ENCODE measurements at regions of chr20 and their contacts with region 1.

Region 1: DNA sequence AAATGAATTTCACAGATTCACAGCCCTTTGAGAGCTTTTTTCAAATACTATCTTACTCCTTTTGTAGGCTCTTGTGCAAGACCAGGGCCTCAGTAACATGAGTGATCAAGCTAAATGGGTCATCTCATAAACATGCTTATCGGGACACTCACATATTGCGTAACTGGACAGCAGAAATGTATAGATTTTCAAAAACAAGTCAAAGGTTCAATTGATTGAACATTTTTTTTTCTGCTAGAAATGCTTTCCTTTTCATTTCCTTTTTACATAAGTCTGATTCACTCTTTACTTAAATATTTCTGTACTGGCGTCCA is 8.7 kb upstream of the SALL4 start:
- DNase-seq: peak; percentile 45 to 56
- H3K4me3 ChIP-seq: no peak overlapping the region
- H3K4me3 Mint-ChIP-seq: no peak overlapping the region
- H3K27ac Mint-ChIP-seq: peak overlapping the region; percentile 32
- H3K4me1 ChIP-seq: peaks cover 36% of the 10 kb centered on the region
- H3K4me1 Mint-ChIP-seq: peaks cover 35% of the 10 kb centered on the region
- H3K27me3 ChIP-seq: no peaks in the 10 kb centered on the region
- H3K27me3 Mint-ChIP-seq: no peaks in the 10 kb centered on the region
- CTCF ChIP-seq: no peak

Region 2: DNA sequence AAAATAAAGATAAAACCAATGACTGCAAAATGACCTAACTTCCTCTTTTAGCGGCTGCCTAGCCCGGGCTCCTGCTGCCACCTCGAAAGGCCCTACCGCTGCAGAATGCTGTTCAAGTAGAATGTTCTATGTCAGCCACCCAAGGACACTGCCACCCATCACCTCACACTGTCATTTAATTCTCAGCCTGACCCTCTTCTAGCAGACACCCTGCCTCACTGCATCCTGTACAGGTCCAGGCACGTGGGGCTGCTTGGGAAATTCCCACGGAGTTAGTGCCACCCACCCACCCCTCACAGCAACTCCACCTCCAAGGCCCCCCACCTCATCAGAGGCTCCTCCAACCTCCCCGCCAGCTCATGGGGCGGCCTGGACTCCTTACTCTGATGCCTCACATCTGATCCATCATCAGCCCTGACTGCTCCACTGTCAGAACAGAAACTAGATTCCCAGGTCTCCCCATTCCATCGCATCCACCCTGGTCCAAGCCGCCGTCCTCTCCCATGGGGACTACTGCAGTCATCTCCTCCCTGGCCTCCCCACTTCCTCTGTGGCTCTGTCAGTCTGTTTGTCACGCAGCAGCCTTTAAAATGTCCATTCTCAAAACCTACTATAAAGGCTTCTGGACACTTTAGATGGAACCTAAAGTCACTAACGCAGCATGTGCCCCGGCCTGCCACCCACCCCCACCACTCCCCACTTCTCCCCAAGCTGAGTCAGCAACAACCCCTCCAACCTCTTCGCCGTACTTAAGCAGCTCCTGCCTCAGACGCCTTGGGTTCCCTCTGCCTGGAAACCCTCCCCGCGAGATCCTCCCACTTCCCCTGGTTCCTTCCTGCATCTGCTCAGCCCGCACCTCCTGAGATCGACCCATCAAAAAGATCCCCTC is 285.5 kb before region 1 on chr20:
- CTCF ChIA-PET with region 1: no interaction called
- POLR2A ChIA-PET with region 1: no interaction called
- intact Hi-C with region 1: no loop called
- DNase-seq: no peak
- H3K4me3 ChIP-seq: no peak overlapping the region
- H3K4me3 Mint-ChIP-seq: no peak overlapping the region
- H3K27ac Mint-ChIP-seq: peak overlapping the region; percentile 59
- H3K4me1 ChIP-seq: peaks cover 40% of the 10 kb centered on the region
- H3K4me1 Mint-ChIP-seq: peaks cover 26% of the 10 kb centered on the region
- H3K27me3 ChIP-seq: no peaks in the 10 kb centered on the region
- H3K27me3 Mint-ChIP-seq: no peaks in the 10 kb centered on the region
- CTCF ChIP-seq: no peak

Region 3: GRCh38 chr20:51554538-51555165 is 256.3 kb before region 1 on chr20:
- CTCF ChIA-PET with region 1: no interaction called
- POLR2A ChIA-PET with region 1: no interaction called
- intact Hi-C with region 1: no loop called
- DNase-seq: no peak
- H3K4me3 ChIP-seq: no peak overlapping the region
- H3K4me3 Mint-ChIP-seq: no peak overlapping the region
- H3K27ac Mint-ChIP-seq: no peak overlapping the region
- H3K4me1 ChIP-seq: peaks cover 4% of the 10 kb centered on the region; the same call in 1 of the 2 replicates
- H3K4me1 Mint-ChIP-seq: no peaks in the 10 kb centered on the region
- H3K27me3 ChIP-seq: peaks cover 3% of the 10 kb centered on the region
- H3K27me3 Mint-ChIP-seq: peaks cover 4% of the 10 kb centered on the region
- CTCF ChIP-seq: no peak

Region 4: GRCh38 chr20:51789434-51789833 is 21.6 kb before region 1 on chr20:
- CTCF ChIA-PET with region 1: no interaction called
- POLR2A ChIA-PET with region 1: no interaction called
- intact Hi-C with region 1: no loop called
- DNase-seq: no peak
- H3K4me3 ChIP-seq: no peak overlapping the region
- H3K4me3 Mint-ChIP-seq: no peak overlapping the region
- H3K27ac Mint-ChIP-seq: peak overlapping the region; percentile 27
- H3K4me1 ChIP-seq: no peaks in the 10 kb centered on the region
- H3K4me1 Mint-ChIP-seq: peaks cover 9% of the 10 kb centered on the region
- H3K27me3 ChIP-seq: no peaks in the 10 kb centered on the region
- H3K27me3 Mint-ChIP-seq: no peaks in the 10 kb centered on the region
- CTCF ChIP-seq: no peak

Region 5: DNA sequence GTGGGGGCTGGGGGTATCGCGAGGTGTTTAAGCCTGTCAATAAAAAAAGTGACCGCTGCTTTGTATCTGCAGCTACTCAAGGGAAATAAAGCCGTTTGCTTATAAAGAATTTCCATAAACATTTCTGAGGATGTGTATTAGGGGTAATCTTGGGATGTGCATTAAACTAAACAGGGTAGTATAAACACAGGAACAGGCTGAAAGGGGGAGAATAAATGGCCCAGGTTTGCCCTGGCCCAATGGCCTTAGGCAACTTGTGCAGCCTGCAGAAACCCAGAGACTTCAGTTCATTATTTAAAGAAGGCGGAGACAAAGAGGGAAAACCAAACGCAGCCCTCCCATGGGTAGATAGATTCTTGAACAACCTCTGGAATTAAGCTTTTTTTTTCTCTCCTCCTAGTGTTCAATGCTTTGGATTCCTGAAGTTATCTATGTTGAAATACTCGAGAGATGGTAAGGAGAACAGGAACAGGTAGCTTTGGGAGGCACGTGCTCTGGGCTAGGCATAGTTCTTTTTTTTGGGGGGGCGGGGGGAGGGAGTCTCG is 26.9 kb after region 1 on chr20:
- CTCF ChIA-PET with region 1: interaction called, 3 read pairs
- POLR2A ChIA-PET with region 1: no interaction called
- intact Hi-C with region 1: loop called (anchors 2 kb)
- DNase-seq: peak; percentile 62 to 68
- H3K4me3 ChIP-seq: no peak overlapping the region
- H3K4me3 Mint-ChIP-seq: no peak overlapping the region
- H3K27ac Mint-ChIP-seq: peak overlapping the region; percentile 75
- H3K4me1 ChIP-seq: peaks cover 13% of the 10 kb centered on the region
- H3K4me1 Mint-ChIP-seq: peaks cover 17% of the 10 kb centered on the region
- H3K27me3 ChIP-seq: no peaks in the 10 kb centered on the region
- H3K27me3 Mint-ChIP-seq: no peaks in the 10 kb centered on the region
- CTCF ChIP-seq: no peak

Region 6: GRCh38 chr20:51899668-51900067 is 88.7 kb after region 1 on chr20:
- CTCF ChIA-PET with region 1: interaction called, 10 read pairs
- POLR2A ChIA-PET with region 1: no interaction called
- intact Hi-C with region 1: no loop called
- DNase-seq: peak in 1 of 2 experiments; percentile 55
- H3K4me3 ChIP-seq: no peak overlapping the region
- H3K4me3 Mint-ChIP-seq: no peak overlapping the region
- H3K27ac Mint-ChIP-seq: no peak overlapping the region
- H3K4me1 ChIP-seq: peaks cover 14% of the 10 kb centered on the region
- H3K4me1 Mint-ChIP-seq: peaks cover 40% of the 10 kb centered on the region
- H3K27me3 ChIP-seq: no peaks in the 10 kb centered on the region
- H3K27me3 Mint-ChIP-seq: no peaks in the 10 kb centered on the region
- CTCF ChIP-seq: no peak

Region 7: GRCh38 chr20:52256454-52256853 is 445.5 kb after region 1 on chr20:
- CTCF ChIA-PET with region 1: no interaction called
- POLR2A ChIA-PET with region 1: no interaction called
- intact Hi-C with region 1: no loop called
- DNase-seq: no peak
- H3K4me3 ChIP-seq: no peak overlapping the region
- H3K4me3 Mint-ChIP-seq: no peak overlapping the region
- H3K27ac Mint-ChIP-seq: no peak overlapping the region
- H3K4me1 ChIP-seq: no peaks in the 10 kb centered on the region
- H3K4me1 Mint-ChIP-seq: no peaks in the 10 kb centered on the region
- H3K27me3 ChIP-seq: 0 out of 2 replicates have a peak, but pooled peaks cover 1% of the 10 kb centered on the region
- H3K27me3 Mint-ChIP-seq: peaks cover 13% of the 10 kb centered on the region
- CTCF ChIP-seq: peak; percentile 1 to 13